ENCODE measurements at regions of chr15 and their contacts with region 1.

Region 1: GRCh38 chr15:90954712-90955671 is at the start of gene RCCD1:
- DNase-seq: peak; percentile 97
- ATAC-seq: peak; percentile 93 to 94
- total RNA-seq, gene RCCD1: 8.4 to 10.6 TPM

Region 2: DNA sequence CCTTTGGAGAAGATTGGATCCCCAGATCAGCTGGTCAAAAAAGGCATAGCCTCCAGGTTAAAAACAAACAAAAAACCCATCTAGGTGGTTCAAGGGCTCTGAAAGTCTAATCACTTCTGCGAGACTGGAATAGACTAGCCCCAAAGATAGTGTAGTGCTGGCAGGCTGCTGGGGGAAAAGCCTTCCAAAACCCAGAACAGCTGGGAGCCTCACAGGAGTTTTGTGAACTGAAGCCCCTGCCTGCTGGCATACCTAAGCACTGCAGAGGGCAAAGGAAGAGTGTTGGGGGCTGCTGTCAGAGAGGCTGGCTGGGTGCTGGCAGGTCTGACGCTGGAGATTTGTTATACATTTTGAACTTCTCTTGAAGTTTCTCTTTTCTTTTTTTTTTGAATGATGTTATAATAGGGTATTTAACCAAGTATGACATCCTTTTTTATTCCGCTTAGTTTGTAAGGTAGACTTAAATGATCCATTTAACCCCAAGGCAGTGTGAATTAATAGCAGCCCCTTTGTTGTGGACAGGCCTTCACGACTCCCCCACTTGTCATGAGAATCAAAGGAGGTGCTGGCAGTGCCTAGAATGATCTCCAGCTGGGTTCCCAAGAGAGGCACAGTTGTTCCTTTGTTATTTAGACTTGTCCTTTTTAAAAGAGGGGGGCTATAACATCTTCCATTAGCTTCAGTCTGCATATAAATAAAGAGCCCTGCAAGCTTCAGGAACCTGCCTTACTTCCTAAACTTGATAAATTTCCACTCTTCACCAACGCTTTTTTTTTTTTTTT is 371.3 kb before region 1 on chr15:
- intact Hi-C with region 1: no loop called
- DNase-seq: no peak
- ATAC-seq: peak; percentile 8 to 53

Region 3: GRCh38 chr15:91022075-91022835 is 67.3 kb after region 1 on chr15 and contains the start of gene VPS33B:
- intact Hi-C with region 1: loop called in 1 of 2 experiments (anchors 10 kb)
- DNase-seq: peak; percentile 87
- ATAC-seq: peak; percentile 95 to 96
- total RNA-seq, gene VPS33B: 8.7 to 8.8 TPM

Region 4: DNA sequence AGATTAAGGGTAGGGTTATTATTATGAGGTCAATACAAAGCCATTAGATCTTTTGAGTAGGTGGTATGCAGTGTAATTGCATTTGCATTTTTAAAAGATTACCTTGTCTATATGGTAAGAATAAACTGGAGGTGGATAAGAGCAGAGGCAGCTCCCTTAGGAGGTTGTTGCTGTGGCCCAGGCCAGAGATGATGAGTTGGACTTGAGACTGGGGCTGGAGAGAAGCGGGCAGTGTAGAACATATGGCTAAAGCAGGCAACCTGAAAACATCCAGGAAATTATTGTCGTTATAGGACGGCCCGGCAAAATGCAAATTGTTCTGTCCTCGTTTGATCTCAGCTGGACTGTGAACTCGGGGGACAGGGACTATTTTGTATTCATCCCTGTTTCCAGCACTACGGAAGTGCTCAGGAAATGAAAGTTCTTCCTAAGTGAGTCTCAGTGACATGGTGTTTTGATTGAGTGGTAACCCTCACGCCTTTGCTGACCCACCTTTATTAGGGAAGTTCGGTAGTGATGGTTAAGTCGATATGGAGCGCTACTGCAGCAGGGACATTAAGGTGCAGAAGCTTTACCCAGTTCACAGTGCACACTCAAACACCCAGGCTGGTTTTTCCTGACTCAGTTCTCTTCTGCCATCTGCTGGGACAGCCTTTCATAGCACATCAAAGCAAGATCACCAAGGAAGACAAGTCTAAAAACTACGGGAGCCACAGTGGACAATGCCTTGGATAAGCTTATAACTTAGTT is 94.6 kb after region 1 on chr15:
- intact Hi-C with region 1: loop called in 1 of 2 experiments (anchors 2 kb)
- DNase-seq: no peak
- ATAC-seq: peak; percentile 85 to 88

Region 5: GRCh38 chr15:91271565-91272153 is 316.7 kb after region 1 on chr15:
- intact Hi-C with region 1: loop called in 1 of 2 experiments (anchors 5 kb)
- DNase-seq: peak; percentile 40
- ATAC-seq: peak; percentile 57 to 71

Measured in left cardiac atrium (tissue), 4 donors.